ENCODE measurements at regions of chr6 and their contacts with region 1.

Region 1: DNA sequence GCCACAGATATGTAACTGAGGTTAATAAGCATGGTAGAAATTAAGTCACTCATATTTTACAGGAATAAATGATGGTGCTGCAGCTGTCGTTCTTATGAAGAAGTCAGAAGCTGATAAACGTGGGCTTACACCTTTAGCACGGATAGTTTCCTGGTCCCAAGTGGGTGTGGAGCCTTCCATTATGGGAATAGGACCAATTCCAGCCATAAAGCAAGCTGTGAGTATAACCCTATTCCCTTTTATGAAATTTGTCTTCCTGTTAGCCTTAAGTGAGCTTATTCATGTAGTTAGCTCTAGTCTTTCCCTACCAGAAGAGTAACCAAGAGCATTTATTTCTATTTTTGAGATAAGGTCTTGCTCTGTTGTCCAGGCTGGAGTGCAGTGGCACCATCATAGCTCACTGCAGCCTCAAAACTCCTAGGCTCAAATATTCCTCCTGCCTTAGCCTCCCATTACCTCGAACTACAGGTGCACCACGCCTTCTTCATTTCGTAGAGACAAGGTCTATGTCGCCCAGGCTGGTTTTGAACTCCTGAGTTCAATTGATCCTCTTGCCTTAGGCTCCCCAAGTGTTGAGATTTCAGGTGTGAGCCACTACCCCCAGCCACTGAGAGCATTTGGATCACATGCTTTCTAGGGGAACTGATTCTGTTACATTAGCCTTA is 12.0 kb downstream of the TCP1 start:
- DNase-seq: no peak
- ATAC-seq: no peak
- H3K4me3 ChIP-seq: no peak overlapping the region
- H3K27ac ChIP-seq: no peak overlapping the region
- H3K4me1 ChIP-seq: no peaks in the 10 kb centered on the region
- H3K27me3 ChIP-seq: no peaks in the 10 kb centered on the region
- CTCF ChIP-seq: no peak
- POLR2A ChIP-seq: no peak

Region 2: GRCh38 chr6:159679091-159680077 is 98.0 kb before region 1 on chr6:
- in situ Hi-C with region 1: loop called in 2 of 4 experiments (anchors 10 kb)
- intact Hi-C with region 1: no loop called
- DNase-seq: no peak
- ATAC-seq: no peak
- H3K4me3 ChIP-seq: no peak overlapping the region
- H3K27ac ChIP-seq: peak overlapping the region; percentile 3 to 50 (median 46)
- H3K4me1 ChIP-seq: peaks cover 15 to 28% of the 10 kb centered on the region in 2 donors
- H3K27me3 ChIP-seq: no peaks in the 10 kb centered on the region
- CTCF ChIP-seq: no peak
- POLR2A ChIP-seq: no peak

Region 3: DNA sequence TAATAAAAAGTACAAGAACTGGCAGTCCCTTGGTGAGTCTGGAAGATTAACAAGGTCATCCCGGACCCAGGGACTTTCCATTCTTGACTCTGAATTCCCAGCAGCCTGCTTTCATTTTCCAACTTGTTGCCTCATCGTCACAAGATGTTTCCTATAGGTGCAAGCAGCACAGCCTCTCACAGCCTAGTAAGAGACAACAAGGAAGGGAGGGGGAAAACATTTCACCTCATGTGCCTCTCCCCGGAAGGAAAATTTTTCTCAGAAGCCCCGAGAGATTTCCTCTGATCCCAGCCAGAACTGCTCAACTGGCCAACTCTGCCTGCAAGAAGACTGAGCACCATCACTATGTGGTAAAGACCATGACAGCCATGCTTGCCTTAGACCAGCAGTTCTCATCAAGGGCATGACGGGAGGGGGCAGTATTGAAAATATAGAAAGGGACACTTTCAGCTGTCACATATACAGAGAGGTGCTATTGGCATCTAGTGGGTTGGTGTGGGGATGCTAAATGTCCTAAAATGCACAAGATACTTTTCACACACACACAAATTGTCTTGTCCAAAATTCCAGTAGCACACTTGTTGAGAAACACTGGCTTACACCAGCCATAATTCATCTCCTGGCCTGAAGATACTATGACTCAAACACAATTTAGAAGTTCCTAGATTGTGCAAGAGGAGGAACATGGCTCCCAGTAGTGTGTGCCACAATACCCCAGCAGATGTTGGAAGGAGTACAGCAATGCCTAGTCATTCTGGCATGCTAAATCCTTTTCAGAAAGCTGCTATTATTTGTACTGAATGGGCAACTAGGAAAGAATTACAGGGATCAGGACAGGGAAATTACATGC is 60.9 kb before region 1 on chr6:
- in situ Hi-C with region 1: no loop called
- intact Hi-C with region 1: no loop called
- DNase-seq: peak; percentile 86 to 88
- ATAC-seq: peak; percentile 94 to 96
- H3K4me3 ChIP-seq: peak overlapping the region; percentile 24 to 42 (median 38)
- H3K27ac ChIP-seq: peak overlapping the region; percentile 83 to 97 (median 94)
- H3K4me1 ChIP-seq: peaks cover 20 to 41% of the 10 kb centered on the region in 2 donors
- H3K27me3 ChIP-seq: no peaks in the 10 kb centered on the region
- CTCF ChIP-seq: peak in 3 of 5 experiments; percentile 8 to 24 (median 10)
- POLR2A ChIP-seq: peak in 1 of 2 donors; percentile 55

Measured in gastrocnemius medialis (tissue), 4 donors.